ENCODE measurements at regions of chr18 and their contacts with region 1.

Region 1: DNA sequence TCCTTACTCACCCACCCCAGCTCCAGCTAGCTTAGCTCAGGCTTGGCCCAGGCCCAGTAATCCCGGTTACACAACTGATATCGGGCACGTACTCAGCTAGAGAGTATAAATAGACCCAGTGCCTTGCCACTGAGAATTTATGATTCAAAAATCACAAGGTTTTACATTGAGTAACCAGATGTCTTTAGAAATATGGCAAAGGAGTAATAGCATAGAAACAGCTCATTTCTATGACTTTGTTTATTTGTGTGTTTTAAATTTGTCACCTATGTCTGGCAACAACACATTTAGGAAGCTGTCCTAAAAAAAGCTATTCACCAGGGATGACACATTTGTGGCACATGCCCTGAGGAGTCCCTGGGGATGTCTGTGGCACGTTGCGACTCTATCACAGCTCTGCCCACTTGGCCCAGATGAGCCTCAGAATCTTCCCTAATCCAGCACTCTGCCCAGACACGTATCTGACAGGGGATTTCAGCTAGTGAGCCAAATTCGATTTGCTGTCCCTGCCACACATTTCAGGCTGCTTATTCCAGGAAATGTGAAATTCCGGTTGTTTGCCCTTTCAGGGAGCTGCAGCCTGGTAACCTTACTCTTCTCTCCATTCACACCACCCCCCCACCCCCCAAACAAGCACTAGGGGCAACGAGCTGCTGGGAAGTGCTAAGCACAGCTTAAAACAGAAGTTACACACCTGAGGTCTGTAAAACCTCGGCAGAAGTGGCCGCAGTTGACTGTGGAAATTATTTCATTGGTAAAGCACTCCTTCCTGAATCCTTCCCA is 85.4 kb upstream of the ZCCHC2 start:
- DNase-seq: peak; percentile 81
- H3K4me3 ChIP-seq: no peak overlapping the region
- H3K27ac ChIP-seq: peak overlapping the region; percentile 72
- H3K4me1 ChIP-seq: peaks cover 25% of the 10 kb centered on the region
- H3K27me3 ChIP-seq: no peaks in the 10 kb centered on the region
- CTCF ChIP-seq: no peak

Region 2: GRCh38 chr18:61901323-61901986 is 536.0 kb before region 1 on chr18:
- intact Hi-C with region 1: no loop called
- DNase-seq: peak; percentile 56
- H3K4me3 ChIP-seq: no peak overlapping the region
- H3K27ac ChIP-seq: no peak overlapping the region
- H3K4me1 ChIP-seq: no peaks in the 10 kb centered on the region
- H3K27me3 ChIP-seq: no peaks in the 10 kb centered on the region
- CTCF ChIP-seq: peak; percentile 93

Region 3: DNA sequence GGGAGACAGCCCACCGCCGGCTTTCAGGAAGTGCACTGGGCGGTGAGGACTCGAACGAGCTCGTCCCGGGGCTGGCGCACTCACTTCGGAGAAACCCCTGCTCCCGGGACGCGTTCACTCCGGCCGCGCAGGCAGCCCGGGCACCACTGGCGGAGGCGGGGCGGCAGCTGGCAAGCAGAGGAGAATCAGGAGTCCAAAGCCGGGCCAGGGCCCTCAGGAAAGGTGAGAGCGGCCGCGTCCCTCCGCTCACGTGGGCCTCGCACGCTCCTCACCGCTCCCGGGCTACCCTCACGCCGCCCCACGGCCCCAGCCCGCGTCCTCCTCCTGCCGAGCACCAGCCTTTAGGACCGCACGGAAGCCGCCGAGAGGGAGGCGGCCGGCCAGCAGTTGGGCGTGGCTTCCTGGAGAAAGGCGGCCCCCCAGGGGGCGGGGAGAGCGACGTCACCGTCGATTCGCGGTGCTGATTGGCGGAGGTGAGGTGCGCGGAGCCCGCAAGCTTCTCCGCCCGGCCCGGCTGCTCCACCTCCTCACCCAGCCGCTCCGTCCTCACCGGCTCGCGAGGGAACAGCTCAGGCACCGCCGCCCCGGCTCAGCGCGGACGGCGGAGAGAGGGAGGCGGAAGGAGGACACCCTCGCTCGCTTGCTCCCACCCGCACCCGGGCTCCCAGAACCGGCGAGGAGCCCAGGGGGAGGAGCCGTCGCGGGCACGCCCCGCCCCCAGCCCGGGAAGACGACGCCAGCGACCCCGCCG is 85.3 kb after region 1 on chr18 and contains the start of gene ZCCHC2:
- intact Hi-C with region 1: loop called (anchors 5 kb)
- DNase-seq: peak; percentile 99
- H3K4me3 ChIP-seq: peak within 1 kb of the TSS; percentile 92
- H3K27ac ChIP-seq: peak within 1 kb of the TSS; percentile 99
- H3K4me1 ChIP-seq: peaks cover 8% of the 10 kb centered on the region
- H3K27me3 ChIP-seq: no peaks in the 10 kb centered on the region
- CTCF ChIP-seq: no peak
- total RNA-seq, gene ZCCHC2: 24.7 to 25.7 TPM

Region 4: GRCh38 chr18:62584241-62585120 is 147.1 kb after region 1 on chr18:
- intact Hi-C with region 1: no loop called
- DNase-seq: peak; percentile 89
- H3K4me3 ChIP-seq: no peak overlapping the region
- H3K27ac ChIP-seq: no peak overlapping the region
- H3K4me1 ChIP-seq: no peaks in the 10 kb centered on the region
- H3K27me3 ChIP-seq: no peaks in the 10 kb centered on the region
- CTCF ChIP-seq: peak; percentile 96